ENCODE measurements at regions of chr5 and their contacts with region 1.

Region 1: DNA sequence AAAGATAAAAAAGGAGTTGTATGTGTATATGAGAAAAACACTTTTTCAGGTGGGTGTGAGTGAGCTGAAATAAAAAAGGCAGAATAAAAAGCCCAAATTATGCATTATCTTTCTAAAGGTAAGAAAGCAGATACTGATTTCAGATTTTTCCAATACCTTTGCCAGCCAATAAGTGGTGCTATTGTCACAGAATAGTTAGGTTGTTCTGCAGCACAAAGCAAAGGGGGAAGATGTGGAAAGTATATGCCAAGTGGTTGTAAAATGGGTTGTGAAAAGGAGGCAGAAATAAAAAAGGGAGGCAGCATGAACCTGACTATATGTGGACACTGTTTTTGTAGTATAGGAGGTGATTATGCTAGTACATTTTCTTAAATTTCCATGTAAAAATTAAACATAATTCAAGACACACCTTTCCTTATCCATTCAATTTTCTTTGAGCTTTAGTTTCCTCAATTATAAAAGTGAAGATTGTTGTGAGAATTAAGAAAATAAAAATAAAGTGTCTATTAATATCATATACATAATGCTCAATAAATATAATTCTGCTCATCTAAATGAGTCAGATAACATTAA is 106.7 kb downstream of the SMIM15 start:
- DNase-seq: peak; percentile 23
- H3K4me3 Mint-ChIP-seq: no peak overlapping the region
- H3K27ac Mint-ChIP-seq: no peak overlapping the region
- H3K4me1 Mint-ChIP-seq: peaks cover 26% of the 10 kb centered on the region
- H3K27me3 Mint-ChIP-seq: no peaks in the 10 kb centered on the region
- CTCF ChIP-seq: peak; percentile 57

Region 2: DNA sequence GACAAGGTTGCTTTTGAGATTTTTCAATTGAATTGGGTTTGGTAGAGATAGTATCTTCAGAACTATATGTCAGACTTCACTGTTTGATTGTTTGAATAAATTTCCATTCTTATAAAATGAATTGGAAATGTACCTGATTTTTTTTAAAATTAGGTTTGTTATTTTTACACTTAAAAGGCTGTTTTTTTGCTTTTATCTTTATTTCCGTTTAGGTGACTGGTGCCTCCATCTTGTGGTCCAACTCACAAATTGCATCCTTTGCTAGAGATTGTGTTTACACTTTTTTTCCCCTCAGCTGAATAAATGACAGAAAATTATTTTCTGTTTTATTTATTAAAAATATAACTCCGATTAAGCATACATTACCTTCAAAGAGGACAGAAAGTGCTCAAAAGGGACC is 94.9 kb before region 1 on chr5:
- CTCF ChIA-PET with region 1: no interaction called
- intact Hi-C with region 1: loop called (anchors 5 kb)
- DNase-seq: no peak
- H3K4me3 Mint-ChIP-seq: no peak overlapping the region
- H3K27ac Mint-ChIP-seq: no peak overlapping the region
- H3K4me1 Mint-ChIP-seq: no peaks in the 10 kb centered on the region
- H3K27me3 Mint-ChIP-seq: no peaks in the 10 kb centered on the region
- CTCF ChIP-seq: peak; percentile 39

Region 3: GRCh38 chr5:61162010-61162831 is 106.7 kb after region 1 on chr5 and contains the start of gene SMIM15:
- CTCF ChIA-PET with region 1: no interaction called
- intact Hi-C with region 1: loop called (anchors 2 kb)
- DNase-seq: peak; percentile 91
- H3K4me3 Mint-ChIP-seq: peak within 1 kb of the TSS; percentile 90
- H3K27ac Mint-ChIP-seq: peak within 1 kb of the TSS; percentile 95
- H3K4me1 Mint-ChIP-seq: peaks cover 22% of the 10 kb centered on the region
- H3K27me3 Mint-ChIP-seq: no peaks in the 10 kb centered on the region
- CTCF ChIP-seq: no peak
- total RNA-seq, gene SMIM15: 89.6 and 100 TPM in 2 replicates

Region 4: GRCh38 chr5:61331407-61332357 is 276.2 kb after region 1 on chr5 and contains the start of gene ZSWIM6:
- CTCF ChIA-PET with region 1: no interaction called
- intact Hi-C with region 1: loop called (anchors 5 kb)
- DNase-seq: peak; percentile 97
- H3K4me3 Mint-ChIP-seq: peak within 1 kb of the TSS; percentile 84
- H3K27ac Mint-ChIP-seq: peak within 1 kb of the TSS; percentile 86
- H3K4me1 Mint-ChIP-seq: peaks cover 52% of the 10 kb centered on the region
- H3K27me3 Mint-ChIP-seq: no peaks in the 10 kb centered on the region
- CTCF ChIP-seq: no peak
- total RNA-seq, gene ZSWIM6: 13.2 and 14.7 TPM in 2 replicates

Region 5: GRCh38 chr5:61525512-61526206 is 470.1 kb after region 1 on chr5:
- CTCF ChIA-PET with region 1: no interaction called
- intact Hi-C with region 1: loop called (anchors 10 kb)
- DNase-seq: peak; percentile 85
- H3K4me3 Mint-ChIP-seq: peak overlapping the region; percentile 30
- H3K27ac Mint-ChIP-seq: peak overlapping the region; percentile 80
- H3K4me1 Mint-ChIP-seq: peaks cover 27% of the 10 kb centered on the region
- H3K27me3 Mint-ChIP-seq: no peaks in the 10 kb centered on the region
- CTCF ChIP-seq: no peak

Region 6: GRCh38 chr5:61658592-61659008 is 603.1 kb after region 1 on chr5:
- CTCF ChIA-PET with region 1: no interaction called
- intact Hi-C with region 1: loop called (anchors 1 kb)
- DNase-seq: peak; percentile 92
- H3K4me3 Mint-ChIP-seq: no peak overlapping the region
- H3K27ac Mint-ChIP-seq: no peak overlapping the region
- H3K4me1 Mint-ChIP-seq: no peaks in the 10 kb centered on the region
- H3K27me3 Mint-ChIP-seq: peaks cover 51% of the 10 kb centered on the region
- CTCF ChIP-seq: peak; percentile 96

Region 7: DNA sequence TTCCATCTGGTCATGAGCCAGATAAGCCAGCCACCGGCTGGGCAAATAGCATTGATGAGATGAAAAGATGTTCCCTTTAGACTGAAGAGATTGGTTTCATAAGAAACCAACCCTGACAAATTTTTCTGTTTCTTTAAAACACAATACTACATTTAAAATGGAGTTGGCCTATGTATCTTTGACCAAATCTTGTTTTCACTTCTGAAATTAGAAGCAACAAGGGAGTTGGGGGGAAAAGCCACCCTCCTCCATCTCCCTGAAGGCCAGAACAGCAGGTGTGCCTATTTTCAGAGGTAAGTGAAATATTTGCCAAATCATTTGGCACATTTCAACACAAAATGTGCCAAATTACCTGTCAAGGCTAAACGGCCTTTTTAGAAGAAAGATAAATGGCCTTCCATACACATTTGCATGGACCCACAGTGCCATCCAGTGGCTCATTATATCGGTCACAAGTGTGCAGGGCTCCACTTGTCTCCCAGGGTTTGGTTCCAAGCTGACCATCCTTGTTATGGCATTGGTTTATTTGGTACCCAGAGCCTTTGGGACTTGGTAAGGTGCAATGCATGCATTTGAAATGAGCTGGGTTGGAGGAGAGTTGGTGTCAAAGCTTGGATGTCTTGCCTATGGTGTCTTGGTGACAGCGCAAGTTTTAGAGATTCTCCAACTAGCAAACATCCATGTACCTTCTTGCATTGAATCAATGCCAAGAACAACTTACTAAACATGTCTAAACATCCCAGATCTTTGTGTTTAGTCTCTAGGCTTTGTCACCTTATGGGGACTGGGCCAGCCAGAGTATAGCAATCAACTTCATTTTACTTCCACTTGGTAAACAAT is 878.5 kb after region 1 on chr5:
- CTCF ChIA-PET with region 1: interaction called, 3 read pairs
- intact Hi-C with region 1: loop called (anchors 1 kb)
- DNase-seq: peak; percentile 70
- H3K4me3 Mint-ChIP-seq: no peak overlapping the region
- H3K27ac Mint-ChIP-seq: no peak overlapping the region
- H3K4me1 Mint-ChIP-seq: no peaks in the 10 kb centered on the region
- H3K27me3 Mint-ChIP-seq: no peaks in the 10 kb centered on the region
- CTCF ChIP-seq: peak; percentile 75